ENCODE measurements at regions of chr15 and their contacts with region 1.

Region 1: GRCh38 chr15:74307827-74308644 is 59.4 kb downstream of the CYP11A1 start:
- DNase-seq: peak in 1 of 2 experiments; percentile 41
- H3K4me3 ChIP-seq: no peak overlapping the region
- H3K4me3 Mint-ChIP-seq: no peak overlapping the region
- H3K27ac Mint-ChIP-seq: no peak overlapping the region
- H3K4me1 ChIP-seq: no peaks in the 10 kb centered on the region
- H3K4me1 Mint-ChIP-seq: no peaks in the 10 kb centered on the region
- H3K27me3 ChIP-seq: peaks cover 1% of the 10 kb centered on the region; the same call in 1 of the 2 replicates
- H3K27me3 Mint-ChIP-seq: peaks cover 32% of the 10 kb centered on the region
- CTCF ChIP-seq: peak; percentile 42 to 70

Region 2: GRCh38 chr15:73972984-73973682 is 334.9 kb before region 1 on chr15:
- CTCF ChIA-PET with region 1: interaction called, 10 read pairs
- POLR2A ChIA-PET with region 1: no interaction called
- intact Hi-C with region 1: no loop called
- DNase-seq: peak; percentile 82 to 87
- H3K4me3 ChIP-seq: no peak overlapping the region
- H3K4me3 Mint-ChIP-seq: peak overlapping the region; percentile 54
- H3K27ac Mint-ChIP-seq: peak overlapping the region; percentile 17
- H3K4me1 ChIP-seq: no peaks in the 10 kb centered on the region
- H3K4me1 Mint-ChIP-seq: peaks cover 8% of the 10 kb centered on the region
- H3K27me3 ChIP-seq: no peaks in the 10 kb centered on the region
- H3K27me3 Mint-ChIP-seq: peaks cover 19% of the 10 kb centered on the region
- CTCF ChIP-seq: peak; percentile 60 to 89

Region 3: GRCh38 chr15:74127260-74127953 is 180.6 kb before region 1 on chr15:
- CTCF ChIA-PET with region 1: interaction called, 22 read pairs
- POLR2A ChIA-PET with region 1: no interaction called
- intact Hi-C with region 1: loop called (anchors 1 kb)
- DNase-seq: peak; percentile 79 to 92
- H3K4me3 ChIP-seq: no peak overlapping the region
- H3K4me3 Mint-ChIP-seq: peak overlapping the region; percentile 45
- H3K27ac Mint-ChIP-seq: no peak overlapping the region
- H3K4me1 ChIP-seq: no peaks in the 10 kb centered on the region
- H3K4me1 Mint-ChIP-seq: no peaks in the 10 kb centered on the region
- H3K27me3 ChIP-seq: peaks cover 4% of the 10 kb centered on the region
- H3K27me3 Mint-ChIP-seq: peaks cover 54% of the 10 kb centered on the region
- CTCF ChIP-seq: peak; percentile 92 to 99

Region 4: GRCh38 chr15:74144153-74144775 is 163.8 kb before region 1 on chr15:
- CTCF ChIA-PET with region 1: interaction called, 10 read pairs
- POLR2A ChIA-PET with region 1: no interaction called
- intact Hi-C with region 1: no loop called
- DNase-seq: peak in 1 of 2 experiments; percentile 28
- H3K4me3 ChIP-seq: no peak overlapping the region
- H3K4me3 Mint-ChIP-seq: no peak overlapping the region
- H3K27ac Mint-ChIP-seq: no peak overlapping the region
- H3K4me1 ChIP-seq: no peaks in the 10 kb centered on the region
- H3K4me1 Mint-ChIP-seq: no peaks in the 10 kb centered on the region
- H3K27me3 ChIP-seq: no peaks in the 10 kb centered on the region; the same call in 1 of the 2 replicates
- H3K27me3 Mint-ChIP-seq: peaks cover 7% of the 10 kb centered on the region
- CTCF ChIP-seq: peak in 1 of 2 experiments; percentile 24

Region 5: DNA sequence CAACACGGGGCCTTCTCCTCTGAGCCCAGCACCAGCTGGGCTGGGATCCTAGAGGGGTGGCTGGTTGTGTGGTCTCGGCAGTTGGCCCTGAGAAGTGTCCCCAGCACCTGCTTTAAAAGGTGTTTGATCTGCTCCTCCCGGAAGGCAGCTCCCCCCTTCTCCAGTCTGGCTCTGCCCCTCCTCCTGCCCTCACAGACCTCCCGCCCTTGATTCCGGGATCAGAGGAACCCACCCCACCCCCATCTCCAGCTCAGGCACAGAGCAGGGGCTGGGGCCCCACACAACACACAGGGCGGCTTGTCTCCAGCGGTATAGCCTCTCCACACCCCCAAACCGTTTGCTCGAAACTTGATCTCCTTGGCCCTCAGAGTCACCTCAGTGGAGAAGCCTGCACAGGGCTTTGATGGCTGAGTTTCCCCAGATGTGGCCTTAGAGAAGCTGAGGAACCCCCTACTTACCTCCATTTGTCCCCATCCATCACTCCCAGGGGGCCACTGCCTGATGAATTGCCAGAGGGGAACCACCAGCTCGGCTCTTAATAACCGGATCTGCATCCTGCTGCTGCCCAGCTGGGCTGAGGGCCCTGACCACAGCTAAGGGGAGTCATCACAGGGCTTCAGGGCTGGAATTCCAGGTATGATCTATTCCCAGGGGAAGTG is 99.0 kb before region 1 on chr15:
- CTCF ChIA-PET with region 1: interaction called, 10 read pairs
- POLR2A ChIA-PET with region 1: no interaction called
- intact Hi-C with region 1: no loop called
- DNase-seq: no peak
- H3K4me3 ChIP-seq: no peak overlapping the region
- H3K4me3 Mint-ChIP-seq: no peak overlapping the region
- H3K27ac Mint-ChIP-seq: no peak overlapping the region
- H3K4me1 ChIP-seq: no peaks in the 10 kb centered on the region
- H3K4me1 Mint-ChIP-seq: peaks cover 7% of the 10 kb centered on the region
- H3K27me3 ChIP-seq: no peaks in the 10 kb centered on the region
- H3K27me3 Mint-ChIP-seq: peaks cover 4% of the 10 kb centered on the region
- CTCF ChIP-seq: no peak

Region 6: DNA sequence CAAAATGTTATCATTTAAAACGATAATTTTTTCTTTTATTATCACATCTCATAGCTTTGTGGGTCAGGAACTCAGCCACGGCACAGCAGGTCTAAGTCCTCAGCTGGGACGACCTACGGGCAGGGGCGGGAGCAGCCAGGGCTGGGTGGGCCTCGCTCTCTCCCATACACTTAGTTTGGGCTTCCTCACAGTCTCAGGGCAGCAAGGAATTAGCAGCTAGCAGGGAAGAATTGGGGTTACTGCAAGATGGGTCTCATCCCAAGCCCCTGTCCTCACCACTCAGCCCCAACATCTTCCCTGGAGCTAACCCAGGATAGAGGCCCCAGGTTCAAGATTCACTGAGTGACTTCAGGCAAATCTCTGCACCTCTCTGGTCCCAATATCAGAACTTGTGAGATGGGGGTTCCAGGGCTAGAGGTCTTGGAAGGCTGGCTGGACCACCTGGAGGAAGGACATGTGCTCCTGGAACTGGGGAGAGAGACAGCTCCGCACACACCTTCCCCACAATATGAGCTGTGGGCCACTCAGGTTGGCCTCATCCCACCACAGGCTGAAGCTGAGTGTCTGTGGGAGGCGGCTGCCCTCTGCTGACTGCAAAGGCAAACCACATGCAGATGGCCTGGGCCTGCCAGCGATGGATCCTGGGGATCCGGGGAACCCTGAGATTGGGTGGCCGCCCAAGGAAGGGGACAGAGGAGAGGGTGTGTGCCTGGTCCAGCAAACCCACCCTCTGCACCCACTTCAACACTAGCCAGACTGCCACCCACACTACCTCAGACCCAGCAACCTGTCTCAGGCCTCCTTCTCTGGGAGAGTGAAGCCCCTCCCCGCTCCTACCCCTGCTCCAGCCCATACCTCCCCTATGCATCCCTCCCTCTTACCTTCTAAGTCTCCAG is 14.4 kb after region 1 on chr15:
- CTCF ChIA-PET with region 1: interaction called, 112 read pairs
- POLR2A ChIA-PET with region 1: no interaction called
- intact Hi-C with region 1: loop called (anchors 1 kb)
- DNase-seq: peak; percentile 68 to 75
- H3K4me3 ChIP-seq: no peak overlapping the region
- H3K4me3 Mint-ChIP-seq: no peak overlapping the region
- H3K27ac Mint-ChIP-seq: no peak overlapping the region
- H3K4me1 ChIP-seq: no peaks in the 10 kb centered on the region
- H3K4me1 Mint-ChIP-seq: no peaks in the 10 kb centered on the region
- H3K27me3 ChIP-seq: no peaks in the 10 kb centered on the region
- H3K27me3 Mint-ChIP-seq: peaks cover 5% of the 10 kb centered on the region
- CTCF ChIP-seq: peak; percentile 77 to 86

Region 7: DNA sequence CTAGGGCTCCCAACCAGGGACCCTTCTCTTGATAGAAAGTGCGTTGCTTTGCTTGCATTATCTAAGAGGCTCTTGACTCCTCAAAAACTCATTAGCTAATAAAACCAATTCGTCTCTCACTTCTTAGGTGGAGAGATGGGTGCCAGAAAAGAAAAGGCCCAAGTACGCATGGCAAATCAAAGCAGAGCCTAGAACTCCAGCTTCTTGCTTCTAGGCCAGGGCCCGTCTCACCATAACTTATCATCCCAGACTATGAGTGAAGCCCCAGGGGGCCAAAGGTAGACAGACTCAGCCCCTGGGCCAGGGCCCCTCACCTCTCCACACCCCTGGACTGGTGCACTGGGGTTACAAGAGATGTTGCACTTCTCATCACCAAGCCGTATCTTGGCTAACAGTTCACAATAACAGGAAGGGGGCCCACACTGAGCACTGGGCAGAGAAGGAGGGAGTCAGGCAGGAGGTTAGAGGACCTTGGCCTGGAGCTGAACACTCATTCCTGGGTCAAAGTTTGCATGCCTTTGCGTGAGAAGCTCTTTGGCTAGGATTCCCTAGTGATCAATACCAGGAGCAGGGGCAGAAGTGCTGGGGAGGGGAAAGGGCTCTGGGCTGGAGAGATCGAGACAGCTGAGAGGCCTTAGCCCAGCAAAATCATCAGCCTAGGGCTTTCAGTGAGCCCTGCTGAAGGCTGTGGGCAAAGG is 422.7 kb after region 1 on chr15:
- CTCF ChIA-PET with region 1: interaction called, 14 read pairs
- POLR2A ChIA-PET with region 1: no interaction called
- intact Hi-C with region 1: no loop called
- DNase-seq: peak; percentile 48 to 81
- H3K4me3 ChIP-seq: no peak overlapping the region
- H3K4me3 Mint-ChIP-seq: no peak overlapping the region
- H3K27ac Mint-ChIP-seq: peak overlapping the region; percentile 33
- H3K4me1 ChIP-seq: peaks cover 30% of the 10 kb centered on the region
- H3K4me1 Mint-ChIP-seq: peaks cover 27% of the 10 kb centered on the region
- H3K27me3 ChIP-seq: no peaks in the 10 kb centered on the region
- H3K27me3 Mint-ChIP-seq: no peaks in the 10 kb centered on the region
- CTCF ChIP-seq: no peak

Measured in Caco-2 (cell line).